ENCODE measurements at regions of chr22 and their contacts with region 1.

Region 1: GRCh38 chr22:47213571-47214230 is 451.3 kb downstream of the TBC1D22A start:
- DNase-seq: peak; percentile 12
- ATAC-seq: peak; percentile 99
- H3K4me3 ChIP-seq: no peak overlapping the region
- H3K27ac ChIP-seq: no peak overlapping the region
- H3K4me1 ChIP-seq: no peaks in the 10 kb centered on the region
- H3K27me3 ChIP-seq: no peaks in the 10 kb centered on the region
- CTCF ChIP-seq: peak; percentile 61 to 97 (median 97); a peak in 5 of 6 replicates
- POLR2A ChIP-seq: no peak
- RAD21 ChIP-seq: peak; percentile 82

Region 2: DNA sequence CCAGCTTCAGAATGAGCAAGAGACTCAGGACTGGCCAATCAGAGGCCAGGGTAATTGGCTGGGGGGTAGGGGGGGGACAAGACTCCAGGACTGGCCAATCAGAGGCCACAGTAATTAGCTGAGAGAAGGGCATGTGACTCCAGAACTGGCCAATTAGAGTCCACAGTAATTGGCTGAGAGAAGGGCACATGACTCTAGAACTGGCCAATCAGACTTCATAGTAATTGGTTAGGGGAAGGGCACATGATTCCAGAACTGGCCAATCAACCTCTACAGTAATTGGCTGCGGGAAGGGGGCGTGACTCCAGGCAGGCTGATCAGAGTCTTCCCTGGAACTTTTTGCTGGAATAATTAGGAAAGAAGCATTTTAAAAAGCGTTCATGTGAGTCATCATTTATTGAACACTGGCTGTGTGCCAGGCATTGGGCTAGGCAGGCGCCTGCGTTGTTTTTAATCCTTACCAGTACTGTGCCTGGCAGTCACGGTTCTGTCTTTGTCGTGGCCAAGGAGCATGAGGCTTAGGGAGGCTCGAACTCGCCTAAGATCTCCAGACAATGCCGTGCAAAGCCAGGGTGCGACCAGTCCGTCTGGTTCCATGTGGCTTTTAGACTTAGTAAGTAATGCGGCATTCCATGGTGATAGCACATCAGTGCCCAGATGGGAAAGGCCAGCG is 56.9 kb after region 1 on chr22:
- CTCF ChIA-PET with region 1: no interaction called
- POLR2A ChIA-PET with region 1: no interaction called
- RAD21 ChIA-PET with region 1: no interaction called
- intact Hi-C with region 1: no loop called
- DNase-seq: no peak
- ATAC-seq: peak; percentile 83
- H3K4me3 ChIP-seq: no peak overlapping the region
- H3K27ac ChIP-seq: no peak overlapping the region
- H3K4me1 ChIP-seq: peaks cover 10 to 16% of the 10 kb centered on the region in 2 experiments
- H3K27me3 ChIP-seq: no peaks in the 10 kb centered on the region
- CTCF ChIP-seq: no peak
- POLR2A ChIP-seq: no peak
- RAD21 ChIP-seq: no peak

Region 3: DNA sequence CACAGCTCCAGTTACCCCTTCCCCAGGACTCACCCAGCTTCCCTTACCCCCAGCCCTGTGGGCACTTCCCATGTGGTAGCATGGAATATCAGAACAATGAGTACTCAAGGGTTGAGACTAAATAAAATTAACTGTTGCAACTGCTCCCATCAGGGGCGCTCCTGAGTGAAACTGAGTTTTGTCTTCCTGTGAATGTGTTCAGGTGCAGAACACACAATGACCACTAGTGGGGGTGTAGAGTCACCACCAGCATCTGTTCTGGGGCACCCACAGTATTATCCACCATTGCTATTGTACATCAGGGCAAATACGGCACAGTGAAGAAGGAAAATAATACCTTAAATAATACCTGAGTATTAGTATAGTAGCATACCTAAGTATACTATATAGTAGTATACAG is 238.5 kb after region 1 on chr22:
- CTCF ChIA-PET with region 1: no interaction called
- POLR2A ChIA-PET with region 1: no interaction called
- RAD21 ChIA-PET with region 1: no interaction called
- intact Hi-C with region 1: loop called (anchors 10 kb)
- DNase-seq: peak; percentile 68
- ATAC-seq: peak; percentile 96
- H3K4me3 ChIP-seq: no peak overlapping the region
- H3K27ac ChIP-seq: no peak overlapping the region
- H3K4me1 ChIP-seq: no peaks in the 10 kb centered on the region
- H3K27me3 ChIP-seq: no peaks in the 10 kb centered on the region
- CTCF ChIP-seq: peak; percentile 93 to 96 (median 95)
- POLR2A ChIP-seq: no peak
- RAD21 ChIP-seq: peak; percentile 62

Region 4: DNA sequence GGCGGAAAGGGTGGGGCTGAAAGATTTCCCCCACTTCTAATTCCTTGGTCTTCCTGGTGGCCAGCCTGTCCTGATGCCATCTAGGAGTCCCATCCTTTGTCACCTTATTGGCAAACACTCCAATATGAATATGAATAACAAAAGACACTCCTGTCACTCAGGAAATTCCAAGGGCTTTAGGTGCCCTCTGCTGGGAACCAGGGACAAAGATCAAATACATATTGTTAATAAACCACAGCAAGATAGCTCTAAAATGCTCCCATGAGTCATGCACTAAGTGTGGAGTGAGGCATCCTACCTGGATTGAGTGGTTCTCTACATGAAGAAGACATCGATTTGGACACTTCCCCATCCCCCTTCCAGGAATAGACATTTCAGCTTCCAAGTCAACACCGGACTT is 372.3 kb after region 1 on chr22:
- CTCF ChIA-PET with region 1: no interaction called
- POLR2A ChIA-PET with region 1: no interaction called
- RAD21 ChIA-PET with region 1: interaction called in 1 of 2 experiments, 3 read pairs
- intact Hi-C with region 1: loop called (anchors 1 kb)
- DNase-seq: peak; percentile 22
- ATAC-seq: peak; percentile 53; the same call in 1 of the 2 replicates
- H3K4me3 ChIP-seq: no peak overlapping the region
- H3K27ac ChIP-seq: no peak overlapping the region
- H3K4me1 ChIP-seq: no peaks in the 10 kb centered on the region
- H3K27me3 ChIP-seq: no peaks in the 10 kb centered on the region
- CTCF ChIP-seq: peak in 2 of 3 experiments; percentile 9 to 25; a peak in 2 of 6 replicates
- POLR2A ChIP-seq: no peak
- RAD21 ChIP-seq: peak; percentile 49

Region 5: DNA sequence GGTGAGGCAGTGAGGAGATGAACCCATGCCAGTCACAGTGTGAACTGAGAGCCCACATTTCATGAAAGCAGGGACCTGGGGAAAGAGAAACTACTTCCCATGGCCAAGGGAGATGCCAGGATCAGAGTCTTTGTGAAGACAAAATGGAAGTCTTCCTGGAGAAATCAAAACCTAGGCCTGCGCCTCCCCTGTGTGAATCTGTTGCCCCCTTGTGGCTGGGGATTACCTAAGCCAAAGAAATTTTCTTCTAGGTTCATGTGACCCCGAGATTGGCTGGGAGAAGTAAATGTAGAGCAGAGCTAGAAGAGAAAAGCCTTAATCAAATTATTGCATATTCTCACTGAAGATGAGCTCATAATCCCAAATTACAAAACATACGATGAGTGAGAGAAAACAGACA is 624.0 kb after region 1 on chr22:
- CTCF ChIA-PET with region 1: no interaction called
- POLR2A ChIA-PET with region 1: no interaction called
- RAD21 ChIA-PET with region 1: no interaction called
- intact Hi-C with region 1: loop called (anchors 5 kb)
- DNase-seq: peak; percentile 13
- ATAC-seq: peak; percentile 53; the same call in 1 of the 2 replicates
- H3K4me3 ChIP-seq: no peak overlapping the region
- H3K27ac ChIP-seq: no peak overlapping the region
- H3K4me1 ChIP-seq: no peaks in the 10 kb centered on the region
- H3K27me3 ChIP-seq: no peaks in the 10 kb centered on the region
- CTCF ChIP-seq: peak; percentile 28 to 63 (median 58); a peak in 5 of 6 replicates
- POLR2A ChIP-seq: no peak
- RAD21 ChIP-seq: peak; percentile 56

Region 6: GRCh38 chr22:48492366-48493320 is 1278.9 kb after region 1 on chr22:
- CTCF ChIA-PET with region 1: no interaction called
- POLR2A ChIA-PET with region 1: no interaction called
- RAD21 ChIA-PET with region 1: no interaction called
- intact Hi-C with region 1: loop called (anchors 2 kb)
- DNase-seq: peak; percentile 48
- ATAC-seq: peak; percentile 90
- H3K4me3 ChIP-seq: no peak overlapping the region
- H3K27ac ChIP-seq: no peak overlapping the region
- H3K4me1 ChIP-seq: no peaks in the 10 kb centered on the region
- H3K27me3 ChIP-seq: no peaks in the 10 kb centered on the region
- CTCF ChIP-seq: peak; percentile 37 to 79 (median 76); a peak in 5 of 6 replicates
- POLR2A ChIP-seq: no peak
- RAD21 ChIP-seq: peak; percentile 77